Head of caudate nucleus (tissue), 42 donors: ENCODE measurements at regions of chr2 and their contacts with region 1.

Region 1: DNA sequence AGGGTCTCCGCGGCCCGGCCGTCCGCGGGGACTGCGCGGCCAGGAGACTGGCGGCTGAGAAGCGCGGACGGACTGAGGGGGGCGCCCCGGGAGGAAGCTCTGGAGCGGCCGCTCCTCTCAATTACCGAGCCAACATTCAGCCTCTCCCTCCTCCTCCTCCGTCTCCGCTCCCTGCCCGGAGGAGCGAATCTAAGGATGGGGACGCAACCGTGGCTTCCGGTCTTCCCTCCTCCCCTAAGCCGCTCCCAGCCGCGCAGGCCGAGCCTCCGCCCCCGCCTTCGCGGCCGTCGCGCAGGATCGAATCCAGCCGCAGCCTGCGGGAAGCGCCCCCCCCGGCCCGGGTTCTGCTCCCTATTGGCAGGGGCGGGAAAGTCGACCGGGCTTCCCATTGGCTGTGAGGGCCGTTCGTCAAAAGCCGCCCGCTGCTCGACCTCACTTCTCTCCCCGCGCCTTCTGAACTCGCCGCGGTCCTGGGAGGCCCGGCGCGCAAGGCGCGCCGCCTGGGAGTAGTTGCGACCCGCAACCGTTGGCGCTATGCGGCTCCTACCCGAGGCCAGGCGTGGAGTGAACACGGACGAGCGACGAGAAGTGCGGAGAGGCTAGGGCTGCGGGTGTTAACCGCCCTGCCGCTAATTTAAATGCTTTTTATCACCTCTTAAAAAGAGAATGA is at the start of gene HNRNPLL:
- DNase-seq: peak; percentile 92 to 99 (median 98)

Region 2: DNA sequence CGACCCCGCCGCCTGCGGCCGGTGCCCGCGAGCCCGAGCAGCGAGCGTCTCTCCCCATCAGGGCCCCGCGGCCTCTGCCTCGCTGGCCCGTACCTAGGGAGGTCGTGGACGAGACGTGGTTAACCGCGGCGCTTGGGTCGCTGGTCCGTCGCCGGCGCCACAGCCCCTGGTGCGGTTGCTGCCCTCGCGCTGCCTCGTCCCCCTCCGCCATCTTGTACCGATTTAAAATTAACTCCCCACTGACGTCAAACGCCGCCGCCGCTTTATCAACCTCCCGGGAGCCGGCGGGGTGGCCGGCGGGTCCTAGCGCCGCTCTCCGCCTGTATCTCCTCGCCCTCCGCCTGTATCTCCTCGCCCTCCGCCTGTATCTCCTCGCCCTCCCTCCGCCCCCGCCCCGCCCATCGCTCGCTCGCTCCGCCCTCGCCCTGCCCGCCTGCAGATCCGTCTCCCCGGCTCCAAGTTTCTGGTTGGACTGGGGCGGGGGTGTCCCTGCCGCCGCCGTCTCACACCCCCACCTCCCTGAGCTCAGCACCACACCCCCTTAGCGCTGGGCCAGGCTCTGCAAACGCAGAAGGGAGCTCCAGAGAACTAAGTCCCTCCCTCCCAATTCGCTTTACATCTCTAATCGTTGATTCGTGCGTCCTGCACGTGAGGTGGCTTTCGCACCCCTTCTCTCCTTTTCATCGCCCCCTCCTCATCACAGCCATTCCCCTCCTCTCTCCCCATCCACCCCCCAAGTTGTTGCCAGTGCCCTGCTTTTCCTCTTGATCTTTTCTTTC is 225.6 kb before region 1 on chr2 and contains the start of gene ATL2:
- intact Hi-C with region 1: loop called (anchors 5 kb)
- DNase-seq: peak; percentile 89 to 98 (median 95)

Region 3: GRCh38 chr2:38485734-38486133 is 117.1 kb before region 1 on chr2:
- intact Hi-C with region 1: no loop called
- DNase-seq: no peak

Region 4: DNA sequence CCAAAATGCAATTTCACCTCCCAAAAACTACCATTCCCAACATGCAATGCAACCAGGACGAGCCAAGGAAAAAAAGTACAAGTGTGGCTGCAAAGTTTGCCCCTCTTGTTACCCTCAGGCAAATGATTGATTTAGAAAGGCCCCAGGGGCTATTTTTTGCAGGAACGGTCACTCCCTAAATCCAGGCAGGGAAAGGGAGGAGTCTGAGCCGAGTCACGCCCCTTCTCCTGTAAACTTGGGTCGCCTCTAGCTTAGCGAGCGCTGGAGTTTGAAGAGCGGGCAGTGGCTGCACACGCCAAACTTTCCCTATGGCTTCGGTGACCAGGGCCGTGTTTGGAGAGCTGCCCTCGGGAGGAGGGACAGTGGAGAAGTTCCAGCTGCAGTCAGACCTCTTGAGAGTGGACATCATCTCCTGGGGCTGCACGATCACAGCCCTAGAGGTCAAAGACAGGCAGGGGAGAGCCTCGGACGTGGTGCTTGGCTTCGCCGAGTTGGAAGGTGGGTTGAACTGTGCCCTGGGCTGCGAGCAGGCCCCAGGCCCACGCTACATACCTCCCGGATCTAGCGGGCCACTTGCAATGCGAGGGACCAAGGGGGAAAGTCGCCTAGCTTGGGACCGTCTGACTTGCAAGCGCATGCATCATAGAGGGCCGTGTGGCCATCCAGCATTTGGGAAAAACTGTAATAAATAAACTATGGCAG is 63.1 kb after region 1 on chr2 and contains the start of gene GALM:
- intact Hi-C with region 1: loop called (anchors 10 kb)
- DNase-seq: peak; percentile 23 to 81 (median 50)

Region 5: GRCh38 chr2:38750891-38751595 is 148.2 kb after region 1 on chr2 and contains the start of gene SRSF7:
- intact Hi-C with region 1: loop called (anchors 2 kb)
- DNase-seq: peak; percentile 92 to 99 (median 97)

Region 6: DNA sequence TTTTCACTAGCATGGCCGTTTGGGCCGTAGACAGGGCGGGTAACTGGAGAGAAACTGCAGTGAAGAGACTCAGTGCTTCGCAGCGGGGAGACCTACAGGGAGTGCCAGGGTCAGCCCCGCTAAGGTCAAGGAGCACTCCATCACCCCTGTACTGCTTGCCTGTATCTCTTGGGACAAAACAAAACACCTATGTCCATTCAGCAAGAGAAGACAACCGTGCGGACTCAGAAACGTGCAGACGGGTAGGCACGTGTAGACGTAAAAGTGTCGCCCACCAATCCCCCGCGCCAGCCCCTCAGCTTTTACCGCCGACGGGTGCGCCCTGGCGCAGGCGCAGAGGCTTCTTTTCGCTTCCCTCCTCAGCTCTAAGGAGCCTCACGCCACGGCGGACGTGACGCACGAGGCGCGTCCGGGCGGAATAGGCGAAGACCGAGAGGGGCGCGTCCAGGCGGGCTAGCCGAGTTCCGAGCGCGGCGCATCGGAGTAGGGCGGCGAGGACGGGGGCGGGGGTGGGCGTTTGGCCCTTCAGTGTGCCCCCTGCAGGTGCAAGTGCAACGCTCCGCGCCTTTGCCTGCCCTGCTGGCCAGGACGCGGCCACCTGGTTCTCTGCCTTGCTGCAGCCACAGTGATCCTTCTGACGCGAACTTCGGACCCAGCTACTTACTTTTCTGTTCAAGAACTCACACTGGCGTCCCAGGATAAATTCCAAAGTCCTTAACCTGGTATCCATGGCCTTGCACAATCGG is 521.3 kb after region 1 on chr2:
- intact Hi-C with region 1: loop called (anchors 10 kb)
- DNase-seq: peak; percentile 87 to 98 (median 96)